Breast epithelium (tissue), 4 donors: ENCODE measurements at regions of chr18 and their contacts with region 1.

Region 1: DNA sequence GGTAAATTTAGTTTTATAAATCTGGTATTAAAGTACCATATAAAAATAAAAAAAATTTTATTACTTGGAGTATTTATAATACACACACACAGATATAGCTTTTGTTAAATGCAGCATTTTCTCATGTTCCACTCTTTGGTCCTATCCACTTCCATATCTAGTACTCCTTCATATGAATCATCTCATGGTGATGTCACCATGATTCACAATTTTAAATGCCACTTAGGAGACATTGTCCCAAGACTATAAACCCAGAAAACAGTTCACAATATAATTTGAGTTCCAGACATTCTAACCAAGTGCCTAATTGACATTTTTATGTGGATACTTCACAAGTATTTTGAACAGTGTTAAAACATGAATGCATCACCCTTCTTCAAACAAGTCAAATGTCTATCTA is 1398.3 kb downstream of the DSC3 start:
- DNase-seq: no peak
- H3K4me3 ChIP-seq: no peak overlapping the region
- H3K27ac ChIP-seq: no peak overlapping the region
- H3K4me1 ChIP-seq: no peaks in the 10 kb centered on the region
- H3K27me3 ChIP-seq: no peaks in the 10 kb centered on the region
- CTCF ChIP-seq: no peak
- POLR2A ChIP-seq: no peak

Region 2: GRCh38 chr18:29418136-29418535 is 226.1 kb before region 1 on chr18:
- intact Hi-C with region 1: no loop called
- DNase-seq: no peak
- H3K4me3 ChIP-seq: no peak overlapping the region
- H3K27ac ChIP-seq: no peak overlapping the region
- H3K4me1 ChIP-seq: no peaks in the 10 kb centered on the region
- H3K27me3 ChIP-seq: no peaks in the 10 kb centered on the region
- CTCF ChIP-seq: no peak
- POLR2A ChIP-seq: no peak

Region 3: DNA sequence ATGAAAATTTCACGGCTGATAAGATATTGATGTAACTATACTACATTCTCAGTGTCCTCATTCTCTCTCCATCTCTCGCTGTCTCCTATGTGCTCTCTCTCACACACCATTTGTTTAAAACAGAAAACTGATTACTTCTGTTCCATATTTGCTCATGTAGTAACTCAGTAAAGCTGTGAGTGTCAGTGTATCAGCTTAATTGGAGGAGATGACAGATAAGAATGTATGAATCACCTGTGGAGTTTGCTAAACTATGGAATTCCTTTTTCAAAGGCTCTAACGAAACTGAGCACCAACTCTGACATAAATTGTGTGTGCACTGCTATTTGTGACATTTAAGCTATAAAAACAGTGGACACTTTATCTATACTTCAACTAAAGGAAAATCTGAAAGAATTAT is 318.3 kb after region 1 on chr18:
- intact Hi-C with region 1: loop called (anchors 5 kb)
- DNase-seq: no peak
- H3K4me3 ChIP-seq: no peak overlapping the region
- H3K27ac ChIP-seq: no peak overlapping the region
- H3K4me1 ChIP-seq: no peaks in the 10 kb centered on the region
- H3K27me3 ChIP-seq: no peaks in the 10 kb centered on the region
- CTCF ChIP-seq: no peak
- POLR2A ChIP-seq: no peak